AG04449 (cell line): ENCODE measurements at regions of chr14 and their contacts with region 1.

Region 1: GRCh38 chr14:64540208-64541157 is at the start of gene HSPA2:
- DNase-seq: peak; percentile 98
- H3K4me3 ChIP-seq: peak within 1 kb of the TSS; percentile 85
- CTCF ChIP-seq: peak; percentile 94

Region 2: GRCh38 chr14:64510825-64511671 is 29.4 kb before region 1 on chr14:
- CTCF ChIA-PET with region 1: interaction called, 10 read pairs
- POLR2A ChIA-PET with region 1: interaction called, 4 read pairs
- DNase-seq: no peak
- H3K4me3 ChIP-seq: no peak overlapping the region
- CTCF ChIP-seq: peak; percentile 78

Region 3: GRCh38 chr14:64612021-64612380 is 71.5 kb after region 1 on chr14:
- CTCF ChIA-PET with region 1: interaction called, 13 read pairs
- POLR2A ChIA-PET with region 1: interaction called, 6 read pairs
- DNase-seq: peak; percentile 63
- H3K4me3 ChIP-seq: no peak overlapping the region
- CTCF ChIP-seq: no peak

Region 4: DNA sequence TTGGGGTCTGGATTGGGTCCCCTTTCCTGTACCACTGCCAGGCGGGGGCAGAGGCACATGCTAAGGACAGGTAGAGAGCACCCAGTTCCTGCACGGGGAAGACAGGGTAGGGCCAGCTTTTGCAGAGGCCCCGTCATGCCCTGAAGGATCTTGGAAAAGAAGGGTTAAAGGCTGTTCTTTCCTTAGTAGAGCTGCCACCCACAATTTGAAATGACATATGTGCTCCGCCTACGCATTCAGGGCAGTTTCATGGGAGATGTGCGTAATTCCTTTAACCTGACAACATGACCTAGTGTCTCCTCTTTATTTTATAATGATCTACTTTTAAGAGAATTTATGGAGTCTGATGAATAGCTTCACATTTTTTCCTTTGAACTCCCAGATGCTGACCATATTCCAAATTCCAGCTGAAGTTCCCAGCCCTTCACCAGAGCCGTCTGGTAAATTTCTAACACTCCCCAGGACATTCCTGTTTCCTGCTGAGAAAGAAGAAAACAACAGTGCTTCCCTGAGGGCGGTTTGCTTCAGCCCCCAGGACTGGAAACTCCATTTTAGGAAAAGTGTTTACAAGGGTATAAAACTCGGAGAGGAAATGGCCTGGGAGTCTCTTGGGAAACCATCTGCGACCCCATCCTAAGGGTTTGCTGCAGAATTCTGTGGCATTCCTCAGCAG is 104.9 kb after region 1 on chr14:
- CTCF ChIA-PET with region 1: interaction called, 8 read pairs
- POLR2A ChIA-PET with region 1: interaction called, 13 read pairs
- DNase-seq: peak; percentile 98
- H3K4me3 ChIP-seq: no peak overlapping the region
- CTCF ChIP-seq: no peak